Heart right ventricle (tissue), 16 donors: ENCODE measurements at regions of chr3 and their contacts with region 1.

Region 1: DNA sequence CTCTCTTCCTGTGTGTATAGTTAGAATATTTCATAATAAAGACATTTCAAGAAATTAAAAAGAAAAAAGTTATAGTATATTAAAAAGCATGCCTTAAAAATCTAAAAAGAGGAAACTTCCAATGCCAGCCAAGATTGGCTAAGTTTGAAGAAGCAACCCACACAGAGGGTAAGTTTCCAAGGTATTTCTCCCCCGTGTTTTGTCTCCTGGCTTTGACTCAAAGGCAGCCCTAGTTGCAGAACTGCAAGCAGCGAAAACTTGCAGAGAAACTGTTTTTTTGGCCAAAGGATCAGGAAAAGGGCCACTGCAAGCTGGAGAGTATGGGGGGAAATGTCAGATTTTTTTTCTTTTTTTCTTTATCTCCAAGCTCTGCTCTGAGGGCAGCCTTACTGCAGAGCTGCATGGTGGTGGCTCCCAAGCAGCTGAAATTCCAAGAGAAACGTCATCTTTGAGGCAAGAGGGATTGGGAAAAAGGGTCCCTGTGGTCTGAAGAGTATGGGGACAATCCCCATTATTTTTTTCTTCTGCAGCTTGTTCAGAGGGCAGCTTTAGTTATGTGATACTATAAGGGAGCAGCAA is 23.0 kb downstream of the HACL1 start:
- DNase-seq: no peak
- ATAC-seq: no peak
- H3K4me3 ChIP-seq: no peak overlapping the region
- H3K27ac ChIP-seq: no peak overlapping the region
- H3K4me1 ChIP-seq: peaks cover 0 to 20% (median 0%) of the 10 kb centered on the region in 9 donors
- H3K27me3 ChIP-seq: no peaks in the 10 kb centered on the region
- CTCF ChIP-seq: no peak

Region 2: GRCh38 chr3:15223685-15224572 is 354.4 kb before region 1 on chr3:
- intact Hi-C with region 1: loop called in 1 of 10 experiments (anchors 10 kb)
- DNase-seq: no peak
- ATAC-seq: no peak
- H3K4me3 ChIP-seq: no peak overlapping the region
- H3K27ac ChIP-seq: no peak overlapping the region
- H3K4me1 ChIP-seq: peaks cover 0 to 9% (median 2%) of the 10 kb centered on the region in 9 donors
- H3K27me3 ChIP-seq: no peaks in the 10 kb centered on the region
- CTCF ChIP-seq: no peak

Region 3: DNA sequence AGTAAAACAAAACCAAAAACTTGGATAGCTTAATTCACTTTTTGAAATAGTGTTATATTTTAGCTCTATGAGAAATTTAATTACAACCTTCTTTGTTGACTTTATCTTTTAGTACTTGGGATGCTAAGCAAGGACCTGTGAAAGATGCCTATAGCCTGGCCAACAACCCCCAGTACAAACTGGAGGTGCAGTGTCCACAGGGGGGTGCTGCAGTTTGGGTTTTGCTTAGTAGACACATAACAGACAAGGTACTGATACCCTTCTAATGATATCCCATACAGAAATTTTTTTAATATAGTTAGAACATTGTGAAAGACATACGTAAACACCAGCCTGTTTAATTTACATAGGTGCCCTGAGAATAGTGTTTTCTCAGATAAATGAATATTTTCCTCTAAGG is 337.0 kb before region 1 on chr3:
- intact Hi-C with region 1: loop called in 1 of 10 experiments (anchors 10 kb)
- DNase-seq: no peak
- ATAC-seq: no peak
- H3K4me3 ChIP-seq: no peak overlapping the region
- H3K27ac ChIP-seq: no peak overlapping the region
- H3K4me1 ChIP-seq: no peaks in the 10 kb centered on the region
- H3K27me3 ChIP-seq: no peaks in the 10 kb centered on the region
- CTCF ChIP-seq: peak in 6 of 9 donors; percentile 3 to 43 (median 28)

Region 4: GRCh38 chr3:15332405-15333098 is 245.8 kb before region 1 on chr3 and contains the start of gene SH3BP5:
- intact Hi-C with region 1: no loop called
- DNase-seq: peak; percentile 69 to 76
- ATAC-seq: peak; percentile 86 to 93 (median 90)
- H3K4me3 ChIP-seq: peak within 1 kb of the TSS; percentile 68 to 98 (median 85)
- H3K27ac ChIP-seq: peak within 1 kb of the TSS in 9 of 10 donors; percentile 69 to 97 (median 87)
- H3K4me1 ChIP-seq: peaks cover 0 to 51% (median 43%) of the 10 kb centered on the region in 9 donors
- H3K27me3 ChIP-seq: no peaks in the 10 kb centered on the region
- CTCF ChIP-seq: peak; percentile 63 to 95 (median 81)
- total RNA-seq, gene SH3BP5: 6.7 to 22.4 (median 9.4) TPM